Activated T-helper 1 cell treated with anti-CD3 and anti-CD28 coated beads, Interleukin-12 subunit alpha, Interleukin-12 subunit beta, Interleukin-2, Interleukin-4 antibody, amounts not matched to agents 30 ng/mL and 10 ng/mL and 1 ng/mL, durations not matched to agents 14 hours and 24 hours and 36 hours (primary cell): ENCODE measurements at regions of chr20 and their contacts with region 1.

Region 1: DNA sequence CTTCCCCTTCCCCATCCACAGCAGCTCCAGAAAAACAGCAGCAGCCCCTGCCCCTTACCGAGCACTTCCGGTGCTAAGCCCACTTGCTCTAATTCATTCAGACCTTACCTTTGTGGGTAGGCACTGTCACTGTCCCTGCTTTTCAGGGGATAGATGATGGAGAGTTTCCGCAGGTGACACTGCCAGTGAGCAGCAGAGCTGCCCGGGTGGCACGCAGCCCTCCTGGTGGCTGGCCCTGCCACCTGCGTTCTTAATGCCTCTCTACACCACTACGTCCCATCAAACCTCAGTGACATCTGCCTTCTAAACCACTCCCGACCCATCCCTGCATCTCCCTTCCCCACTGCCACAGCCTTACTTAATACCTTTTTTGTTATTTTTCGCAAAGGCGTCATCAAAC is 89.8 kb downstream of the NFATC2 start:
- DNase-seq: no peak
- H3K4me3 Mint-ChIP-seq: no peak overlapping the region
- H3K27ac Mint-ChIP-seq: no peak overlapping the region
- H3K4me1 Mint-ChIP-seq: peaks cover 53% of the 10 kb centered on the region
- H3K27me3 Mint-ChIP-seq: no peaks in the 10 kb centered on the region

Region 2: GRCh38 chr20:51413857-51414256 is 38.9 kb before region 1 on chr20:
- intact Hi-C with region 1: loop called (anchors 1 kb)
- DNase-seq: no peak
- H3K4me3 Mint-ChIP-seq: no peak overlapping the region
- H3K27ac Mint-ChIP-seq: peak overlapping the region; percentile 85
- H3K4me1 Mint-ChIP-seq: peaks cover 82% of the 10 kb centered on the region
- H3K27me3 Mint-ChIP-seq: no peaks in the 10 kb centered on the region

Region 3: DNA sequence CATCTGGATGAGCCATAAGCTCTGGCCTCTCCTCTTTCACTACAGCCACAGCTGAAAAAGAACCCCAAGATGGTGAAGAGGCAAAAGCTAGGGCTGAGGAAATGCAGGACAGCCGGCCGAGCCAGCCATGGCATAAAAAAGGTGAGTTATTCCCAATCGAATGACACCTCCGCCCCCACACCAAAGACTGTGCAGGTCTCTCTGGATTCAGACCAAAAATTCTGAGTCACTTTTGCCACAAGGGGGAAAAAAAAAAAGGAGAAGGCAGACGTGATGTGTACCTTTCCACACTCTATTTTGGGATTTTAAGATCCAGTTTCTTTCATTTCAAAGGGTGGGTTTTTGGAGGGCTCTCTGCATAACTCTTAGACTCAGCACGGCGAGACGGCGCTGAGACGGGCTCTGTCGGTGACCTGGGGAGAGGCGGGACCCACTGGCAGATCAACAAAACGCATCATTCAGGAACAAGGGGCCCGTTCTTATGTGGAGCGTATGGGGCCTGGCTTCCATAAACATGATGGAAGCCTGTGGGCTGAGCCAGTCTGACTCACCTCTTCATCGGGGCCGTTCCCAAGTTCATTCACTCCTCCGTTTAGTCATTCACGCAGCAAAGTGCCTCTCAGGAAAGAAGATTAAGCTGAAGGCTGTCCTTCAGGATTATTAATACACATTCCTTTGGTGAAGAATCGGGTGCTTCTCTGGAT is 35.0 kb after region 1 on chr20:
- intact Hi-C with region 1: no loop called
- DNase-seq: no peak
- H3K4me3 Mint-ChIP-seq: no peak overlapping the region
- H3K27ac Mint-ChIP-seq: no peak overlapping the region
- H3K4me1 Mint-ChIP-seq: peaks cover 88% of the 10 kb centered on the region
- H3K27me3 Mint-ChIP-seq: no peaks in the 10 kb centered on the region